AG04450 (cell line): ENCODE measurements at regions of chr5 and their contacts with region 1.

Region 1: GRCh38 chr5:126236994-126237393 is 186.2 kb upstream of the GRAMD2B start:
- DNase-seq: no peak
- H3K4me3 ChIP-seq: no peak overlapping the region
- H3K27ac ChIP-seq: no peak overlapping the region
- H3K27me3 ChIP-seq: no peaks in the 10 kb centered on the region
- CTCF ChIP-seq: no peak

Region 2: GRCh38 chr5:125870256-125870655 is 366.7 kb before region 1 on chr5:
- CTCF ChIA-PET with region 1: interaction called, 10 read pairs
- POLR2A ChIA-PET with region 1: no interaction called
- DNase-seq: no peak
- H3K4me3 ChIP-seq: no peak overlapping the region
- H3K27ac ChIP-seq: no peak overlapping the region
- H3K27me3 ChIP-seq: no peaks in the 10 kb centered on the region
- CTCF ChIP-seq: no peak